HepG2 (cell line): ENCODE measurements at regions of chr19 and their contacts with region 1.

Region 1: GRCh38 chr19:58513694-58514563 is 2.1 kb upstream of the SLC27A5 start:
- DNase-seq: peak; percentile 88
- ATAC-seq: peak; percentile 59
- H3K4me3 ChIP-seq: peak overlapping the region; percentile 36 to 81 (median 69)
- H3K27ac ChIP-seq: peak overlapping the region; percentile 79
- H3K4me1 ChIP-seq: peaks cover 73% of the 10 kb centered on the region
- H3K27me3 ChIP-seq: no peaks in the 10 kb centered on the region; a peak in 1 of 5 replicates
- CTCF ChIP-seq: peak; percentile 96
- EP300 ChIP-seq: no peak
- POLR2A ChIP-seq: peak; percentile 84 to 95
- RAD21 ChIP-seq: peak; percentile 97

Region 2: DNA sequence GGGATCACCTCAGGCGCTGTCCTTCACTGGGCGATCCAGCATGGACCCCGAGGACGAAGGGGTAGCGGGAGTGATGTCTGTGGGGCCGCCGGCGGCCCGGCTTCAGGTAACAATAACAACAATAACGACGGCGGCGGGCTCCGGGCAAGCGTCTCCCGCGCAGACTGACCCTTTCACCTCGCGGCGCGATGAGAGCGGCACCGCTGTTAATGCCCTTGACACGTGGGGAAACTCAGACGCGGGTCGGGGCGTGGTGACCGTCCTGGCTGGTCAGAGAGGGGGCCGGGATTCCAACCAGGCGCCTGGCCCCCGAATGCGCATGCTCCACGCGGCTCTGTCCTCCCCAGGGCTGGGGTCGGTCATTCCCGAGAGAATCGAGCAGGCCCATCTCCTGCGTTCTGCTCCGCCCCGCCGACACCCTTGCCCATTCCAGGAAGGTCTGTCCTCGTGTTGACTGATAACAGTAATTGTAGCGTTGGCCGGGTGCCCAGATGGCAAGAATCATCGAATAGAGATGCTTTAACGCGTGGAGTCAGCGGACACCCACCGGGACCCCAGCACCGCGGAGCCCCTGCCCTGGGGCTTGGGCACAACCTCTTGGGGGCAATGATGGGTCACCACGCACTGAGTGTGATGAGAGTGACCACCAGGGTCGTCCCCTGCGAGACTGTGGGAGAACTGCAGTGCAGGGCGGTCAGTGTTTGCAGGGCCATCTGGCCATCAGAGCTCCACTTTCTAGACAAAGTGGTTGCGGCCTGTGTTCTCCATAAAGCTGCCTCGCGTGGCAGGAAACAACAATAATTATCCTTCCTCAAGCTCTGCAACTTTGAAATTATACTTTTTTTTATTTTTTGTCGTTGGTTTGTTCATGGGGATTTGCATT is 234.6 kb before region 1 on chr19:
- CTCF ChIA-PET with region 1: no interaction called
- POLR2A ChIA-PET with region 1: no interaction called
- in situ Hi-C with region 1: no loop called
- intact Hi-C with region 1: no loop called
- DNase-seq: peak; percentile 62
- ATAC-seq: peak; percentile 71
- H3K4me3 ChIP-seq: peak overlapping the region; percentile 85 to 96 (median 96)
- H3K27ac ChIP-seq: peak overlapping the region; percentile 85
- H3K4me1 ChIP-seq: peaks cover 37% of the 10 kb centered on the region
- H3K27me3 ChIP-seq: no peaks in the 10 kb centered on the region; a peak in 1 of 5 replicates
- CTCF ChIP-seq: no peak
- EP300 ChIP-seq: no peak
- POLR2A ChIP-seq: no peak
- RAD21 ChIP-seq: 0 out of 2 replicates have a peak, but pooled peaks have one; percentile 20

Region 3: DNA sequence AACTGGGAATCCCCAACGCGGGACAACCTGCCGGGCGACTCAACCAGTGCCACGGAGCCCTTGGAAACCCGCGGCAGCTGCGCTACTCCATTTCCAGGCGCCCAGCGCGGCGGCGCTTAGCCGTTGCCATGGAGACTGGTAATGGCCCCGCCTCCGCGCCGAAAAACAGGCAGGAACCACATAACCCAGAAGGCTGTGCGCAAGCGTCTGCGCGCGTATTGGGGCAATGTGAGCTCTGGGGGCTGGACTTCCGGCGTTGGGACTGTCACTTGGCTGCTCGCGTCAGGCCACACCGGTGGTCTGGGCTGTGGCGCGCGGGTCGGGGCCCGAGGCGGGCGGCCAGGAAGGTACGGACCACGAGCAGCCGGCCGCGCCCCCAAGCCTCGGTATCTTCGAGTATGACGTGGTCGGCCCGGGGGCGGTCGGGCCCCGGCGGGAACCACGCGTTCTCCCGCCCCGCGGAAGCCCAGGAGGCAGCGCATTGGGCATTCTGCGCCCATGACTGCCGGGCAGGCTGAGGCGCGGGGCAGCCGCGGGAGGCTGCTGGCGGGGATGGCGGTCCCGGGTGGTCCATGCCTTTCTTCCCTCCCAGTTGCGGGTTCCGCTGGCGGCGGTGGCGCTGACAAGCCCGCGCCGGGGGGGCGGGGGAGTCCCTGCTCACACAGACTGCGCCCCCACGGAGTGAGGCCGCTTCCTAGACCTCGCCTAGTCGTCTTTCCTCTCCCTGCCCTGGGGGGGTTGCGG is 62.4 kb before region 1 on chr19 and contains the start of gene ZNF324B:
- CTCF ChIA-PET with region 1: no interaction called
- POLR2A ChIA-PET with region 1: no interaction called
- in situ Hi-C with region 1: no loop called
- intact Hi-C with region 1: no loop called
- DNase-seq: peak; percentile 94
- ATAC-seq: peak; percentile 98
- H3K4me3 ChIP-seq: peak within 1 kb of the TSS; percentile 68 to 92 (median 83)
- H3K27ac ChIP-seq: no peak within 1 kb of the TSS
- H3K4me1 ChIP-seq: peaks cover 7% of the 10 kb centered on the region
- H3K27me3 ChIP-seq: no peaks in the 10 kb centered on the region
- CTCF ChIP-seq: peak; percentile 14; the same call in 1 of the 2 replicates
- EP300 ChIP-seq: no peak
- POLR2A ChIP-seq: peak in 1 of 2 experiments; percentile 76; a peak in 2 of 4 replicates
- RAD21 ChIP-seq: no peak
- total RNA-seq, gene ZNF324B: 2.5 and 3.0 TPM in 2 replicates

Region 4: DNA sequence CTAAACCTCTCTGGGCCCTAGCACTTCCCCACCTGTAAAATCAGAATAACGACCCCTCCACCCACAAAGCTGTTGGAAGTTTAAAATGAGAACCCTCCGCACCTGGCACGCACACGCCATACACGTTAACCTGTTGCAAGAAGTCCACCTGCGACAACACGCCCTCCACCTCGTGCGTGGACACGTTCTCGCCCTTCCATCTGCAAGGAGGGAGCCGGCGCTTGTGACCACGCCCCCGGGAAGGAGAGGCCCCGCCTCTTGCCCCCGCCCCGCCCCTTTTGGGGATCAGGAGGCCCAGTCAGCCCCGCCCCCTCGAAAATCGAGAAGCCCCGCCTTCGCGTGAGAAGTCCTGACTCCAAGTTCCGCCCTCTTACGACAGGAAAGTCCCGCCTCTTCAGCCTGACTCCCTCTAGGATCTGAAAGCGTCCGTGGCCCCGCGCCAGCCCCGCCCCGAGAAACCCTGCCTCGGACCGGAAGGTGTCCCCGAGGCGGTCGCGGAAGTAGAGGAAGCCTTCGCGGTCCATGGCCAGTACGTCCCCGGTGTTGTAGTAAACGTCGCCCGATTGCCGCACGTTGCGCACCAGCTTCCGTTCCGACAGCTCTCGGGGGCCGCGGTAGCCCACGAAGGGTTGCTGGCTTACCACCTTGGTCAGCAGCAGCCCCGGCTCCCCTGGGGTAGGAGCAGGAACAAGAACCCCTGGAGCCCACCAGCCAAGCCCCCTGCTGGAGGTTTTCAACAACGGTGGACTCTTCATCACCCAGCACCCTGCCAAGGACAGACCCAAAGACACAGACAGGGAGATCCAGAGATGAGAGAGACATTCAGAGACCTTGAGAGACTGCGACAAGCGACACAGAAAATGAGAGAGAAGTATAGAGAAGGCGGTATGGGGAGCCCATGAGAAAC is 14.7 kb before region 1 on chr19:
- CTCF ChIA-PET with region 1: no interaction called
- POLR2A ChIA-PET with region 1: interaction called, 44 read pairs
- in situ Hi-C with region 1: no loop called
- intact Hi-C with region 1: loop called (anchors 2 kb)
- DNase-seq: peak; percentile 98
- ATAC-seq: peak; percentile 96
- H3K4me3 ChIP-seq: peak overlapping the region; percentile 60 to 87 (median 77)
- H3K27ac ChIP-seq: peak overlapping the region; percentile 68
- H3K4me1 ChIP-seq: peaks cover 37% of the 10 kb centered on the region
- H3K27me3 ChIP-seq: no peaks in the 10 kb centered on the region; a peak in 1 of 5 replicates
- CTCF ChIP-seq: peak; percentile 67
- EP300 ChIP-seq: peak; percentile 15 to 59; a peak in 1 of 4 replicates
- POLR2A ChIP-seq: peak; percentile 14 to 68
- RAD21 ChIP-seq: peak; percentile 71

Region 5: DNA sequence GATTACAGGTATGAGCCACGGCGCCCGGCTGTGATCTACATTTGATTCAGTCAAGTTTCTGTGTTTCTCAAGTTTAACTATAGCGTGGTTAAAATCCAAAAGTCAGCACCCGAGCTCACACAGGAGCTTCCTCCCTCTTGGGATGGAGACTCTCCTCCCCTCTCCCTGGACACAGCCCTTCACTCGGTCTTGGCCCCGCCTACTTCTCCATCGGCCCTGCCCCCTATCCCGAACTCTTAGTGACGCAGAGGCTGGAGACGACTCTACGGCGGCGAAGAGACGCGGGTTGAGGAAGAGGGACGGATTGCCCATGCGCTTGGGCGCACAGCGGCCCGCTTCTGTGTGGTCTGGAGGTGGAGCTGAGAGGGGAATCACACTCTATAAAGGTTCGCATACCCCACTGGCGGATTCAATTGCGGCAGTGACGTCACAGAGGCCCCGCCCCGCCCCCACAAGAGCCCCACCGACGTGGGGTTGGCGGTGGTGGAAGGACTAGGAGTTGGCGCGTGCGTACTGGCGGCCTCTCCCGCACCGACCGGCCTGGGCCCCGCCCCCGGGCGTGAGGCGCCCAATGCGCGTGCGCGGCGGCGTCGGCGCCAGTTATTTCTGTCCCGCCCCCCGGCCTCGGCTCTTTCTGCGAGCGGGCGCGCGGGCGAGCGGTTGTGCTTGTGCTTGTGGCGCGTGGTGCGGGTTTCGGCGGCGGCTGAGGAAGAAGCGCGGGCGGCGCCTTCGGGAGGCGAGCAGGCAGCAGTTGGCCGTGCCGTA is 30.1 kb after region 1 on chr19 and contains the start of gene TRIM28:
- CTCF ChIA-PET with region 1: no interaction called
- POLR2A ChIA-PET with region 1: interaction called, 59 read pairs
- in situ Hi-C with region 1: no loop called
- intact Hi-C with region 1: no loop called
- DNase-seq: peak; percentile 96
- ATAC-seq: peak; percentile 92
- H3K4me3 ChIP-seq: peak within 1 kb of the TSS; percentile 91 to 99 (median 96)
- H3K27ac ChIP-seq: peak within 1 kb of the TSS; percentile 80
- H3K4me1 ChIP-seq: peaks cover 24% of the 10 kb centered on the region
- H3K27me3 ChIP-seq: no peaks in the 10 kb centered on the region; a peak in 2 of 5 replicates
- CTCF ChIP-seq: no peak
- EP300 ChIP-seq: no peak; a peak in 1 of 4 replicates
- POLR2A ChIP-seq: peak; percentile 85 to 97
- RAD21 ChIP-seq: no peak; the same call in 1 of the 2 replicates
- total RNA-seq, gene TRIM28: 302 and 361 TPM in 2 replicates

Region 6: GRCh38 chr19:58558623-58559274 is 44.8 kb after region 1 on chr19:
- CTCF ChIA-PET with region 1: no interaction called
- POLR2A ChIA-PET with region 1: interaction called, 31 read pairs
- in situ Hi-C with region 1: no loop called
- intact Hi-C with region 1: no loop called
- DNase-seq: peak; percentile 95
- ATAC-seq: peak; percentile 66
- H3K4me3 ChIP-seq: peak overlapping the region; percentile 71 to 84 (median 84)
- H3K27ac ChIP-seq: peak overlapping the region; percentile 96
- H3K4me1 ChIP-seq: peaks cover 34% of the 10 kb centered on the region
- H3K27me3 ChIP-seq: no peaks in the 10 kb centered on the region
- CTCF ChIP-seq: 0 out of 2 replicates have a peak, but pooled peaks have one; percentile 9
- EP300 ChIP-seq: no peak
- POLR2A ChIP-seq: peak in 1 of 2 experiments; percentile 75; a peak in 1 of 4 replicates
- RAD21 ChIP-seq: peak; percentile 52